Ovary (tissue), 10 donors: ENCODE measurements at regions of chr6 and their contacts with region 1.

Region 1: GRCh38 chr6:133923938-133924593 is 29.0 kb upstream of the TBPL1 start:
- DNase-seq: peak; percentile 51 to 82 (median 58)
- H3K4me3 ChIP-seq: no peak overlapping the region
- H3K27ac ChIP-seq: no peak overlapping the region
- H3K4me1 ChIP-seq: no peaks in the 10 kb centered on the region
- H3K27me3 ChIP-seq: no peaks in the 10 kb centered on the region
- CTCF ChIP-seq: peak; percentile 57 to 91 (median 84)
- EP300 ChIP-seq: no peak
- POLR2A ChIP-seq: no peak

Region 2: GRCh38 chr6:133973109-133973971 is 49.3 kb after region 1 on chr6:
- intact Hi-C with region 1: loop called in 1 of 4 experiments (anchors 10 kb)
- DNase-seq: no peak
- H3K4me3 ChIP-seq: no peak overlapping the region
- H3K27ac ChIP-seq: no peak overlapping the region
- H3K4me1 ChIP-seq: peaks cover 2% of the 10 kb centered on the region
- H3K27me3 ChIP-seq: no peaks in the 10 kb centered on the region
- CTCF ChIP-seq: peak; percentile 22 to 51 (median 48)
- EP300 ChIP-seq: no peak
- POLR2A ChIP-seq: no peak

Region 3: DNA sequence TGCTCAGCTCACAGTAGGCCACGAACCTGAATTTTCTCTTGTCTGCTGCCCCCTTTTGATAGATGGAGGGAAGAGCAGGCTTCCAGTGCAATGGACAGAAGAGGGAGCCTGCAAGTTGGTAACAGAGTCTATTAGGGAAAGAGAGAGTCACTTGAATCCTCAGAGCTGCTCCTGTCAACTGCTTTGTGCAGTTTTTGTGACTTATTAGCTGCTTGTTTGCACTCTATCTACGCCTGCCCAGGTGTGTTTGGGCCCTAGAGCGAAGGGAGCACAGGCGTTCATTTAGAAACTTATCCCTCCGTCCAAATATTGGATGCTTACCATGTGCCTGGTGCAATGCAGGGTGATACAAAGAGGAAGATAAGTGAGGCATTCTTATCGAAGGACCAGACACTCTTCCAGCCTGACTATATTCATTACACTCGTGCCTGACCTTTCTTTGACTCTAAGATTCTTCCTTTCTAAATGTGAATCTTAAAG is 139.9 kb after region 1 on chr6:
- intact Hi-C with region 1: loop called in 1 of 4 experiments (anchors 10 kb)
- DNase-seq: peak; percentile 46 to 71 (median 52)
- H3K4me3 ChIP-seq: no peak overlapping the region
- H3K27ac ChIP-seq: no peak overlapping the region
- H3K4me1 ChIP-seq: no peaks in the 10 kb centered on the region
- H3K27me3 ChIP-seq: no peaks in the 10 kb centered on the region
- CTCF ChIP-seq: peak; percentile 16 to 60 (median 49)
- EP300 ChIP-seq: no peak
- POLR2A ChIP-seq: no peak

Region 4: GRCh38 chr6:134097114-134097707 is 173.1 kb after region 1 on chr6:
- intact Hi-C with region 1: loop called (anchors 5 kb)
- DNase-seq: peak; percentile 55 to 73 (median 62)
- H3K4me3 ChIP-seq: no peak overlapping the region
- H3K27ac ChIP-seq: no peak overlapping the region
- H3K4me1 ChIP-seq: no peaks in the 10 kb centered on the region
- H3K27me3 ChIP-seq: no peaks in the 10 kb centered on the region
- CTCF ChIP-seq: peak in 2 of 3 donors; percentile 57 to 68
- EP300 ChIP-seq: no peak
- POLR2A ChIP-seq: no peak